ENCODE measurements at regions of chr1 and their contacts with region 1.

Region 1: GRCh38 chr1:157992031-157992832 is 1.2 kb upstream of the KIRREL1 start:
- DNase-seq: peak; percentile 63
- H3K4me3 ChIP-seq: peak overlapping the region in 1 of 2 experiments; percentile 10; a peak in 1 of 4 replicates
- H3K27ac ChIP-seq: peak overlapping the region; percentile 20 to 76; a peak in 3 of 4 replicates
- H3K4me1 ChIP-seq: peaks cover 4 to 26% of the 10 kb centered on the region in 2 experiments; a peak in 3 of 4 replicates
- H3K27me3 ChIP-seq: no peaks in the 10 kb centered on the region
- CTCF ChIP-seq: peak; percentile 98
- EP300 ChIP-seq: no peak
- RAD21 ChIP-seq: peak; percentile 83

Region 2: DNA sequence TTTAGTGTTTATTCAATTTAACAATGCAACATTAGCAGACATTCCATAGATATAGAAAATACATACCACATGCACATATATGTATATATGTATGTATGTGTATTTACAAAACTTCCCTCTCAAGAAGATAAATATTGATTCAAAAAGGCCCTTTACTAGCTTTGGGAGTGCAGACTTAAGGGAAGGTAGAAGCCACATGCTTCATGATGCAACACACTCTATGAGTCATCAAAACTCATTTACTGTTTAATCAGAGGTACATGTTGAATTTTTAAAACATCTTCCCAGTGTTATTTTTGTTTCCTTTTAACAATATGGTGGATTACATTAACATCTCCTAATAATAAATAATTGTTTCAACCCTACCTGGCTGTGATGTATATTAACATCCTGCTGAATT is 60.2 kb before region 1 on chr1:
- CTCF ChIA-PET with region 1: no interaction called
- POLR2A ChIA-PET with region 1: no interaction called
- DNase-seq: no peak
- H3K4me3 ChIP-seq: no peak overlapping the region
- H3K27ac ChIP-seq: no peak overlapping the region
- H3K4me1 ChIP-seq: no peaks in the 10 kb centered on the region
- H3K27me3 ChIP-seq: peaks cover 23% of the 10 kb centered on the region; the same call in 1 of the 2 replicates
- CTCF ChIP-seq: no peak
- EP300 ChIP-seq: no peak
- RAD21 ChIP-seq: no peak

Region 3: GRCh38 chr1:157978586-157979403 is 13.4 kb before region 1 on chr1:
- CTCF ChIA-PET with region 1: interaction called, 17 read pairs
- POLR2A ChIA-PET with region 1: no interaction called
- DNase-seq: peak; percentile 15
- H3K4me3 ChIP-seq: no peak overlapping the region
- H3K27ac ChIP-seq: no peak overlapping the region
- H3K4me1 ChIP-seq: peaks cover 0 to 7% of the 10 kb centered on the region in 2 experiments; a peak in 1 of 4 replicates
- H3K27me3 ChIP-seq: peaks cover 8% of the 10 kb centered on the region; the same call in 1 of the 2 replicates
- CTCF ChIP-seq: no peak
- EP300 ChIP-seq: no peak
- RAD21 ChIP-seq: no peak